ENCODE measurements at regions of chr5 and their contacts with region 1.

Region 1: DNA sequence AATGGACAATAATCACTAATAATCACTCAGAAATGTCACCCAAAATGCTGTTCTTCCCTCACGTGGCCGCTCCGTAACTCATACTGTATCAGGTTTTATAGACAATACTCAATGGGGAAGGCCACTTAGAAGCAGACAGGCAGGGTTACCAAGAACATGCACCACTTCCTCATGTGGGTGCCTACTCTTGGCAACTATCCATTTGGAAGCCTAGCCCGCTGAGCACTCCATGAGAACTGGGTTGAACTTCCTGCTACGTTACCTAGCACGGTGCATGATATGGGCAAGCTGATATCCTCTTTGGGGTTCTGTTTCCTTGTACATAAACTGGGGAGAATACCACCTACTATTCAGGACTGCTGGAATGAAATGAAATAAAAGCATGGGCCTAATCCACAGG is 14.3 kb downstream of the DAP start:
- DNase-seq: no peak
- CTCF ChIP-seq: no peak

Region 2: DNA sequence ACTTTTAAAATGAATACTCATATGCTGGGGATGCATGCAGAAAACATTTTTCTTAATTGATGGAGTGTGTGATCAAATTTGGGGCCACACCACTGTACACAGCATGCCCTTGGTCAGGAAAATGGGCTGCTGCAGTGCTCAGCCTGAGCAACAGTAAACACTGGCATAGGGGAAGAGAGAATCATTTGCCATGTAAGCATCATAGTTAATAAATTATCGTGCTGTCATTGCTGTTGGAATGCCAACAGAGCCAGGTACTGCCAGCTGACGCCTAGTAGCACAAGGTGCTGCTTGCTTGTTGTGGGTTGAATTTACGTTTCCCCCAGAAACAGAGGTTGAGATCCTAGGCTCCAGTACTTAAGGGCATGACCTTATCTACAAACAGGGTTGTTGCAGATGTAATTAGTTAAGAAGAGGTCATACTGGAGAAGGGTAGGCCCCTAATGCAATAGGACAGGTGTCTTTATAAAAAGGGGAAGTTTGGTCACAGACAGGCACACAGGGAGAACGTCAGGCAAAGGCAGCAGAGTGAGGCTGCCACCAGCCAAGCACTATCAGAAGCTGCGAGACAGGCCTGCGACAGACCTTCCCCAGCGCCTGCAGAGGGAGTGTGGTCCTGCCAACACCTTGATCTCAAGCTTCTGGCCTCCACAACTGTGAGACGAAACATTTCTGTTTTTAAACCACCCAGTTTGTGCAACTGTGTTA is 11.0 kb before region 1 on chr5:
- CTCF ChIA-PET with region 1: interaction called, 11 read pairs
- POLR2A ChIA-PET with region 1: interaction called, 8 read pairs
- DNase-seq: peak; percentile 62
- CTCF ChIP-seq: no peak

Region 3: GRCh38 chr5:10768328-10768899 is 21.7 kb after region 1 on chr5:
- CTCF ChIA-PET with region 1: no interaction called
- POLR2A ChIA-PET with region 1: no interaction called
- DNase-seq: no peak
- CTCF ChIP-seq: no peak